SK-N-SH (cell line): ENCODE measurements at regions of chr5 and their contacts with region 1.

Region 1: DNA sequence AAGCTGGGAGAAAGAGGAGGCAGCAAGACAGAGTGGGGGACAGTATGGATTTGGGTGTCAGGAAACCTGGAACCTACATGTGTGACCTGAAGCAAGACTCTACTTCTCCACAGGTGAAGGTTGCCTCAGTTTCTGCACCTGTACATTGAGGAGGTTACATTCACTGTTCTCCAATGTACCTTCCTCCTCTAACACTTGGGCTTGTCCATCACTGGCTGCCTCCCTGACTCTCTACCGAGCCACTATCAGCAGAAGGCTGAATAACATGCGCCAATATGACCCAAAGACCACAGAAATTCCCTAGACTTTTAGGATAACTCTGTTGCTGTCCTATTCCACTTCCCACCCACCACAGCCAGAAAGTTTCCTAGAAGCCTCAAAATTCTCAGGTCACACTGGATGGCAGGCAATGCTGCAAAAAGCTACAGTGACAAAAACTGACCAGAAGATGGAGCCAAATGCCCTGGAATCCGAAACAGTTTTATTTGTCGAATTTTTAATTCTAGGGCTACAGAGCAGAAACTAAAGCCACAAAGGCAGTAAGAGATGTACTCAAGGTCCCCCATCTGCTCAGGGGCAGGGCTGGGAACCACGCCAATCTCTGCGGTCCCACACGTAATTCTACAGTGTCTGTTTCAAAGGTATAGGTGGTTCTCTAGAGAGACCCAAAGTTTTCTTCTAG is 64.4 kb downstream of the FAM114A2 start:
- DNase-seq: peak; percentile 48
- H3K4me3 ChIP-seq: no peak overlapping the region
- H3K27ac ChIP-seq: no peak overlapping the region
- H3K4me1 ChIP-seq: no peaks in the 10 kb centered on the region
- H3K27me3 ChIP-seq: no peaks in the 10 kb centered on the region
- CTCF ChIP-seq: peak; percentile 84
- EP300 ChIP-seq: no peak
- RAD21 ChIP-seq: peak; percentile 90

Region 2: GRCh38 chr5:153987306-153987705 is 13.0 kb after region 1 on chr5:
- CTCF ChIA-PET with region 1: interaction called, 22 read pairs
- POLR2A ChIA-PET with region 1: no interaction called
- DNase-seq: no peak
- H3K4me3 ChIP-seq: no peak overlapping the region
- H3K27ac ChIP-seq: no peak overlapping the region
- H3K4me1 ChIP-seq: no peaks in the 10 kb centered on the region
- H3K27me3 ChIP-seq: no peaks in the 10 kb centered on the region
- CTCF ChIP-seq: no peak
- EP300 ChIP-seq: no peak
- RAD21 ChIP-seq: no peak

Region 3: GRCh38 chr5:154196955-154197652 is 222.8 kb after region 1 on chr5:
- CTCF ChIA-PET with region 1: interaction called, 15 read pairs
- POLR2A ChIA-PET with region 1: no interaction called
- DNase-seq: peak; percentile 59
- H3K4me3 ChIP-seq: no peak overlapping the region
- H3K27ac ChIP-seq: peak overlapping the region in 1 of 2 experiments; percentile 1; a peak in 1 of 4 replicates
- H3K4me1 ChIP-seq: peaks cover 24 to 45% of the 10 kb centered on the region in 2 experiments
- H3K27me3 ChIP-seq: no peaks in the 10 kb centered on the region
- CTCF ChIP-seq: peak; percentile 51
- EP300 ChIP-seq: no peak
- RAD21 ChIP-seq: peak; percentile 57

Region 4: DNA sequence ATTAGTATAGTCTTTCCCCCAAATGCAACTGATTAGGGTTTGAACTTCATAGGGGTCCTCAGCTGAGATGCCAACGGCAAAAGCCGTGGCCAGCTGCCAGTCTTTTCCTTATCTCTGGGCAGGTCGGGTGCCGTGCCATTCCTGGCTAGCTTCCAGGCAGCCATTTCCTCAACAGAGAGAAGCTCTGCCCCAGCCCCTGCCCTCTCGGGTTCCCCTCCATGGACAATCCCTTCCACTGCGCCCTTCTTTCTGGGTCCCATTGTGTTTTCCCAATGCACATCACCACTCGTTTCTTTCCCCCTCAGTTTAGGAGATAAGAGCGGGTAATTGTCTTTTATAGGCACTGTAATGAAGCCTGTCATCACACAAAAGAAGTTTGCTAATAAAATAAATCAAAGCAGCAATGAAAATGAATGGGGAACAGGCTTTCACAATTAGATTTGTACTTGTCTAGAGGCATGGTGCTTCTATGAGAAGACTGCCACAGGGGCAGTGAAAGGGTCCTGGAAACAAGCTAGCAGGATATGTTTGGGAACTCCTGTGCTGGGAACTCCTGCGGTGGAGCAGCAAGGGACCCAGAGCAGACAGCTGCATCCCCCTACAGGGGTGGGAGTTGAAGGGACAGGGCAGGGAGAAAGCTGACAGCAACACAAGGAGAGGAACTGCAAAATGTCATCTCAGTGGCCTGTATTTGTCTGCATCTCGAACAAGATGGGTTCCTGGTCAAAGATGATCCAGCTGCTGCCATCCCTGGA is 423.6 kb after region 1 on chr5:
- CTCF ChIA-PET with region 1: interaction called, 14 read pairs
- POLR2A ChIA-PET with region 1: no interaction called
- DNase-seq: peak; percentile 79
- H3K4me3 ChIP-seq: no peak overlapping the region
- H3K27ac ChIP-seq: no peak overlapping the region
- H3K4me1 ChIP-seq: peaks cover 0 to 23% of the 10 kb centered on the region in 2 experiments; a peak in 2 of 4 replicates
- H3K27me3 ChIP-seq: no peaks in the 10 kb centered on the region
- CTCF ChIP-seq: no peak
- EP300 ChIP-seq: peak in 1 of 2 experiments; percentile 80; a peak in 2 of 4 replicates
- RAD21 ChIP-seq: no peak

Region 5: DNA sequence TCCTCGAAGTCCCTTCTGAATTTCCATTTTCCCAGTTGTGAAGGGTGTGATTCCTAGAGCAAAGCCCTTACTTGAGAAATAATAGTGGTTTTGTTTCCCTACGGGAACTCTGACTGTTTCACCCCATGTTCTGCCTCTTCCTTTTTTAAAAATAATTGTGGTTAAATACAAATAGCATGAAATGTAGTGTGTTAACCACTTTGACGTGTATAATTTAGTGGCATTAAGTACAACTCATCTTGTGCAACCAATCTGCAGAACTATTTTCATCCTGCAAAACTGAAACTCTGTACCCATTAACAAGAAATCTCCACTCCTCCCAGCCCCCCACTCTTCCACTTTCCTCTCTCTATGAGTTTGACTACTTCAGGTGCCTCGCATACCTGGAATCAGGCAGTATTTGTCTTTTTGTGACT is 539.4 kb after region 1 on chr5:
- CTCF ChIA-PET with region 1: no interaction called
- POLR2A ChIA-PET with region 1: no interaction called
- DNase-seq: no peak
- H3K4me3 ChIP-seq: no peak overlapping the region
- H3K27ac ChIP-seq: no peak overlapping the region
- H3K4me1 ChIP-seq: peaks cover 0 to 37% of the 10 kb centered on the region in 2 experiments; a peak in 1 of 4 replicates
- H3K27me3 ChIP-seq: no peaks in the 10 kb centered on the region; the same call in 1 of the 2 replicates
- CTCF ChIP-seq: no peak
- EP300 ChIP-seq: no peak
- RAD21 ChIP-seq: no peak